Activated CD4-positive, alpha-beta T cell treated with anti-CD3 and anti-CD28 coated beads, Interleukin-2, amount 10 ng/mL, durations not matched to agents 7 days and 5 days (primary cell): ENCODE measurements at regions of chr1 and their contacts with region 1.

Region 1: GRCh38 chr1:78617615-78618026 is 2.6 kb upstream of the IFI44L start:
- DNase-seq: peak; percentile 77
- H3K4me3 Mint-ChIP-seq: peak overlapping the region; percentile 35
- H3K27ac Mint-ChIP-seq: peak overlapping the region; percentile 61
- H3K4me1 Mint-ChIP-seq: peaks cover 37% of the 10 kb centered on the region
- H3K27me3 Mint-ChIP-seq: peaks cover 10% of the 10 kb centered on the region

Region 2: DNA sequence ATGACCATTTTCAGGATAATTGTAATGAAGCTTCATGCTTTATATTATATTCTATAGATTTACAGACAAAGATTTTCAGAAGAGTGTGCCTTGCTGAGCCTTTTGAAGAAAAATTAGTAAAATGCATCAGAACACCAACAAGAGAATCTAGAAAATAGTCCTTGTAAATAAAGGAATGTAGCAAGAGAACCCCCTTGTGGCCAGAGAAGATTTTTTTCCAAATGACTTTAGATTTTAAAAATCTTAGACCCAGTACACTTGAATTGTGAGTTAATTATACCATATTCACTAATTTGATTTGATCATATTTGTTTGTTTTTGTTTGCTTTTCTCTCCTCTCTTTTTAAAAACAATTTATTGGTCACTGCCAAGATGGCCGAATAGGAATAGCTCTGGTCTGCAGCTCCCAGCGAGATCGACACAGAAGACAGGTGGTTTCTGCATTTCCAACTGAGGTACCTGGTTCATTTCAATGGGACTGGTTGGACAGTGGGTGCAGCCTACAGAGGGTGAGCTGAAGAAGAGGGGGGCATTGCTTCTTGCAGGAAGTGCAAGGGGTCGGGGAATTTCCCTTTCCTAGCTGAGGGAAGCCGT is 10.2 kb before region 1 on chr1:
- CTCF ChIA-PET with region 1: interaction called, 13 read pairs
- POLR2A ChIA-PET with region 1: no interaction called
- DNase-seq: no peak
- H3K4me3 Mint-ChIP-seq: no peak overlapping the region
- H3K27ac Mint-ChIP-seq: peak overlapping the region; percentile 43
- H3K4me1 Mint-ChIP-seq: peaks cover 4% of the 10 kb centered on the region
- H3K27me3 Mint-ChIP-seq: peaks cover 24% of the 10 kb centered on the region

Region 3: DNA sequence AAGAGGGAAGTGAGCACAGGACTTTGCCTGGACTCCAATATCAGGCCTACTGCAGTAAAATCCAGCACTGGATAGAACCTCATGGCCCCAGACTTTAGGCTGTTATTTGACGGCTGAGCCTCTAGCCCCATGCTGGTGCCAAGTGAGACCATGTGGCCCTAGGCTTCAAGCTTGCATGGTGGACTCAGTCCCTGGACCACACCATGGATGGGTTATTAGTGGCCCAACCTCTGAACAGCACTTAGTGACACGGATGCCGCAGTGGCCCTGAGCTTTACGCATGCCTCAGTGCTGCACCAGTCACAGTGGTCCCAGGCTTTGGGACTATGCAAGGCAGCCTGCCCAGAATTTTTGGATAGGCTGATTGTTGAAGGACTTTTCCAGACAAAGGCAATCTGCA is 15.6 kb after region 1 on chr1:
- CTCF ChIA-PET with region 1: interaction called, 11 read pairs
- POLR2A ChIA-PET with region 1: no interaction called
- DNase-seq: no peak
- H3K4me3 Mint-ChIP-seq: no peak overlapping the region
- H3K27ac Mint-ChIP-seq: no peak overlapping the region
- H3K4me1 Mint-ChIP-seq: peaks cover 66% of the 10 kb centered on the region
- H3K27me3 Mint-ChIP-seq: no peaks in the 10 kb centered on the region

Region 4: GRCh38 chr1:78649628-78650027 is 32.0 kb after region 1 on chr1 and contains the start of gene IFI44:
- CTCF ChIA-PET with region 1: interaction called, 6 read pairs
- POLR2A ChIA-PET with region 1: interaction called, 21 read pairs
- DNase-seq: peak; percentile 83
- H3K4me3 Mint-ChIP-seq: peak within 1 kb of the TSS; percentile 96
- H3K27ac Mint-ChIP-seq: peak within 1 kb of the TSS; percentile 89
- H3K4me1 Mint-ChIP-seq: peaks cover 63% of the 10 kb centered on the region
- H3K27me3 Mint-ChIP-seq: no peaks in the 10 kb centered on the region
- total RNA-seq, gene IFI44: 187 to 190 TPM

Region 5: GRCh38 chr1:78799926-78800325 is 182.3 kb after region 1 on chr1:
- CTCF ChIA-PET with region 1: no interaction called
- POLR2A ChIA-PET with region 1: no interaction called
- DNase-seq: no peak
- H3K4me3 Mint-ChIP-seq: no peak overlapping the region
- H3K27ac Mint-ChIP-seq: no peak overlapping the region
- H3K4me1 Mint-ChIP-seq: no peaks in the 10 kb centered on the region
- H3K27me3 Mint-ChIP-seq: peaks cover 4% of the 10 kb centered on the region